IMR-90 (cell line): ENCODE measurements at regions of chr3 and their contacts with region 1.

Region 1: DNA sequence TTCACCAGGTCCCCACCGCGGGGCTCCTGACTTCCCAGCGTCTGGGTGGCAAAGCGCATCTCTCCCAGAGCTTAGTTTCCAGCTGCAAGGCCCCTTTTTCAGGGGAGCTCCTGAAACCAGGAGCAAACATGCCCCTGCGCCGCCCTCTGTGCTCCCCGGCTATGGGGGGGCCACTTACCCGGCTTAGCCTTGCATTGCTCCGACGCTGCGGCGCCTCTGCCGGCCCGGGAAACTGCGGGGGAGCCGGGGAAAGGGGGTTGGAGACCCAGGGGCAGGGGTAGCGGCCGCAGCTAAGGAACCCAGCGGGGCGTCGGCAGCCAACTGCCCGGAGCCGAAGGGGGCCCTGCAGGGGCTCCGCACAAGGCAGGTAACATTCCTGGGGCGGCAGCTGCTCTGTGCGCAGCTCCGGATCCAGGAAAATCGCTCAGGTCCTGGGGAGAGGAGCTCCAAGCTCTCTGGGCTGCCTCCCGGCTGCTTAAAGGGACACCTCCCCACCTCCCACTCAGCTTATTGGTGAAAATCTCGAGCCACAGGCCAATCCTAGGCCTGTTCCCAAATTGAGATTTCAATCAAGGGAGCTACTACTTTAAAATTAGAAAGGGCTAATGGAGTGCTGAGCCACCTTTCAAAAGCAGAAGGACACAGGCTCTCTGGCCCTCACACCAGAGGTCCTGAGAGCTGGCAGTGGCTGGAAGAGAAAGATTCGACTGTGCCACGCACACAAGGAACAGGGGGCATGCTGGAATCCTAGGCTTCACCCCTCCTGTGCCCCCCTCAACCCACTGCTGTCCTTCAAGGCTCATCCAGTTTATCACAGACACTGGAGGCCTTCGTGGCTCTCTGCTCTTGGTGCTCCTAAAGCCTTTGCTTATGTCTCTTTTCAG is 42.7 kb upstream of the PRICKLE2 start:
- DNase-seq: peak; percentile 68
- ATAC-seq: peak; percentile 90
- H3K4me3 ChIP-seq: peak overlapping the region; percentile 81
- H3K27ac ChIP-seq: peak overlapping the region; percentile 93
- H3K4me1 ChIP-seq: peaks cover 14% of the 10 kb centered on the region
- H3K27me3 ChIP-seq: no peaks in the 10 kb centered on the region
- CTCF ChIP-seq: 0 out of 2 replicates have a peak, but pooled peaks have one; percentile 2
- POLR2A ChIP-seq: peak; percentile 69
- RAD21 ChIP-seq: no peak; the same call in 1 of the 2 replicates

Region 2: GRCh38 chr3:64150623-64151207 is 117.2 kb before region 1 on chr3:
- CTCF ChIA-PET with region 1: no interaction called
- POLR2A ChIA-PET with region 1: interaction called, 3 read pairs
- dilution Hi-C with region 1: no loop called
- in situ Hi-C with region 1: no loop called
- intact Hi-C with region 1: loop called (anchors 1 kb)
- DNase-seq: peak; percentile 99
- ATAC-seq: peak; percentile 97
- H3K4me3 ChIP-seq: no peak overlapping the region
- H3K27ac ChIP-seq: peak overlapping the region; percentile 96
- H3K4me1 ChIP-seq: peaks cover 18% of the 10 kb centered on the region
- H3K27me3 ChIP-seq: no peaks in the 10 kb centered on the region
- CTCF ChIP-seq: no peak
- POLR2A ChIP-seq: peak; percentile 54; the same call in 1 of the 2 replicates
- RAD21 ChIP-seq: peak; percentile 16; the same call in 1 of the 2 replicates

Region 3: DNA sequence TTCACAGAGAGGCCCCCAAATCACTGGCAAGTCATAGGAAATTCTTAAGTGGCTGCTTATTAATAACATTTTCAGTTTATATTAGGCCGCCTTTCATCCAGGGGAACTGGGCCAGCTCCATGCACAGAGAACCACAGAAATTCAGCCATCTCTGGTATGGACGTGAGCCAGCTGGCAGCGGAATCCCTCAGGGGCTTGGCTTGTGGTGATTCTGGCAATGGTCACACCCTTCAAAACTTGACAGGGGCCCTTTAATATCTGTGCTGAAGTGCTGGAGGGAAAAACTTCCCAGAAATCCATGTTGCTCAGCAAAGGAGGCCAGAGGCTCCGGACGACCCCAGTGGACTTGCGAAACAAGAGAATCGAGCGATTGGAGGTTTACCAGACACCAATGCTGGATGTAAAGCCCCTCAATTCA is 54.0 kb before region 1 on chr3:
- CTCF ChIA-PET with region 1: no interaction called
- POLR2A ChIA-PET with region 1: no interaction called
- dilution Hi-C with region 1: no loop called
- in situ Hi-C with region 1: no loop called
- intact Hi-C with region 1: no loop called
- DNase-seq: peak; percentile 82
- ATAC-seq: peak; percentile 43
- H3K4me3 ChIP-seq: peak overlapping the region; percentile 30; the same call in 1 of the 2 replicates
- H3K27ac ChIP-seq: peak overlapping the region; percentile 66
- H3K4me1 ChIP-seq: peaks cover 26% of the 10 kb centered on the region
- H3K27me3 ChIP-seq: no peaks in the 10 kb centered on the region
- CTCF ChIP-seq: no peak
- POLR2A ChIP-seq: peak; percentile 42; the same call in 1 of the 2 replicates
- RAD21 ChIP-seq: no peak; the same call in 1 of the 2 replicates

Region 4: DNA sequence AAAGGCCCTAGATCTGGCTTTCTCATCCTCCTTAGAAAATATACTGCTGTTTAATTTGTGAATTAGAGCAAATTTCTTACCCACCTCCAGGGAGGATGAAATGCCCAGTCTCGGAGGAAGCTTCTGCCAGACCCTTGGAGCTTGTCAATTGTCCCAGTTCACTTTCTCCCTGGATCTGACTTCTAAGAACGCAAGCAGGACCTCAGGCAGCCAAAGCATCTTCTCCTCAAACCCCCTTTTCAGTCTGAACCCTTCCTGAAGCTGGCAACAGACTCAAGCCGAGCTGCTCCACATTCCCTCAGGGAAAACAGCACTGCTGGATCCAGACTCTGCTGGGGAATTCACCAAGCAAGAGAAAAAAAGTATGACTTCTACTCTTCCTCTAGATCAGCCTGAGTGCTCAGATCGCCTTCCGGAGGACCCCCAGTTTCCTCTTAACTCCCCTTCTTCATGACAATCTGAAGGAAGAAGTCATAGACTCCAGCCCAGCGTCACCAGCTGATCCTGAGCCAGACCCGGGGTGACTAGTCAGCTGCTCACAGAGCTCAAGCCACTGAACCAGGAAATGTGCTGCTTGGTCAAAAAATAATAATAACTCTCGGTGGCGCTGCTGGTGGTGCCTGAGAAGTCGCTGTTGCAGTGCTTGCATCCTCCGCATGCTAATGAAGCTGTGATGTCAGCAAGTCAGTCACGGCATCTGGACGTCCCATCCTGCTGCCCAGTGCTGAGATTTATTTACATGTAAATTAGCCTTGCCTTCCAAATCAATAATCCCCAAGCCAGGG is 42.9 kb before region 1 on chr3 and contains the start of gene PRICKLE2:
- CTCF ChIA-PET with region 1: interaction called, 4 read pairs
- POLR2A ChIA-PET with region 1: no interaction called
- dilution Hi-C with region 1: no loop called
- in situ Hi-C with region 1: no loop called
- intact Hi-C with region 1: loop called (anchors 5 kb)
- DNase-seq: peak; percentile 96
- ATAC-seq: peak; percentile 73
- H3K4me3 ChIP-seq: peak within 1 kb of the TSS; percentile 38
- H3K27ac ChIP-seq: peak within 1 kb of the TSS; percentile 89
- H3K4me1 ChIP-seq: peaks cover 32% of the 10 kb centered on the region
- H3K27me3 ChIP-seq: no peaks in the 10 kb centered on the region
- CTCF ChIP-seq: peak; percentile 49
- POLR2A ChIP-seq: peak; percentile 67
- RAD21 ChIP-seq: peak; percentile 70
- total RNA-seq, gene PRICKLE2: 14.2 and 16.7 TPM in 2 replicates

Region 5: DNA sequence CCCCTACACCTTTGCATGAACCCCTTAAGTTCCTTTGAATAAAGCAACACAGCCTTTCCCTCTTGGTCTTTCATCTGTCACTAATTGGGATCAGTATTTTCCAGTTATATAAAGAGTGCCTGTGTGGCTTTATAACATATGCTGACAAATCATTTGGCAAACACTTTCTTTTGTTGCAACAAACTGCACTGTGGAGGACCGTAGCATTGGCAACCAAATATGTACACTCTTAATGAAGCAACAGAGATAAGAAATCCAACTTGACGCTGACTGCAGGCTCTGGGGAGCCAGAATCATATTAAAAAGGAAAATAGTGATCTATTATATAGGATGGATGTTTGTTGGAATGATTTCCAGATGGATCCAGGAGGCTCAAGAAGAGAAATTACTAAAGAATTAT is 77.4 kb after region 1 on chr3:
- CTCF ChIA-PET with region 1: no interaction called
- POLR2A ChIA-PET with region 1: interaction called, 3 read pairs
- dilution Hi-C with region 1: no loop called
- in situ Hi-C with region 1: no loop called
- intact Hi-C with region 1: loop called (anchors 2 kb)
- DNase-seq: peak; percentile 89
- ATAC-seq: peak; percentile 4
- H3K4me3 ChIP-seq: no peak overlapping the region
- H3K27ac ChIP-seq: peak overlapping the region; percentile 77
- H3K4me1 ChIP-seq: peaks cover 30% of the 10 kb centered on the region
- H3K27me3 ChIP-seq: no peaks in the 10 kb centered on the region
- CTCF ChIP-seq: no peak
- POLR2A ChIP-seq: no peak
- RAD21 ChIP-seq: no peak

Region 6: DNA sequence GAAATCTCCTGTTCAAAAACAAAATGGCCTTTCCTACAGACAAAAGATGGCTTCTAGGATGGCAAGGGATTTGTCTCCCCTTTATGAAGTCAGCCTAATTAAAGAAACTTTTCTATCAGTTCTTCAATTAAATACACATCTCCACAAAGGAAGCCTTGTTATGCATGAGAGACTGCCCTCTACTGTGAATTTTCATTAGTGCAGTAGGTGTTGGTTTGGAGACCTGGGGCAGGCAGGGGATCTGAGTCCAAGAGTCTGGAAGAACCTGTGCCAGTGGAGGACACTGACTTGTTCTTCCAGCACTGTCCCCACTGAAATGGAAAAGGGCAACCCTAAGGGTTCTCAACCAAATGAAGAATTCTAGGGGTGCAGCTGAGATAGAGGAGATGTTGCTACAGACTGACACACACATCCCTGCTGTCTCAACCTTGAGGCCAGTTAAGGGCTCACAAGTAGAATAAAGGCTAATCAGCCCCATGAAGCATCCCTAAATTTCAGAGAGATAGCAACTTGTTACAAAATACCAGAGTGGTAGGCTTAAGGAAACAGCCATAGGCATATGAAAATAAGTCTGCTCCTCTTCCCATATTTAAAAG is 131.3 kb after region 1 on chr3:
- CTCF ChIA-PET with region 1: no interaction called
- POLR2A ChIA-PET with region 1: no interaction called
- dilution Hi-C with region 1: no loop called
- in situ Hi-C with region 1: no loop called
- intact Hi-C with region 1: loop called (anchors 1 kb)
- DNase-seq: peak; percentile 70
- ATAC-seq: peak; percentile 89
- H3K4me3 ChIP-seq: no peak overlapping the region
- H3K27ac ChIP-seq: no peak overlapping the region
- H3K4me1 ChIP-seq: peaks cover 2% of the 10 kb centered on the region
- H3K27me3 ChIP-seq: no peaks in the 10 kb centered on the region
- CTCF ChIP-seq: peak; percentile 85
- POLR2A ChIP-seq: no peak
- RAD21 ChIP-seq: peak; percentile 95

Region 7: DNA sequence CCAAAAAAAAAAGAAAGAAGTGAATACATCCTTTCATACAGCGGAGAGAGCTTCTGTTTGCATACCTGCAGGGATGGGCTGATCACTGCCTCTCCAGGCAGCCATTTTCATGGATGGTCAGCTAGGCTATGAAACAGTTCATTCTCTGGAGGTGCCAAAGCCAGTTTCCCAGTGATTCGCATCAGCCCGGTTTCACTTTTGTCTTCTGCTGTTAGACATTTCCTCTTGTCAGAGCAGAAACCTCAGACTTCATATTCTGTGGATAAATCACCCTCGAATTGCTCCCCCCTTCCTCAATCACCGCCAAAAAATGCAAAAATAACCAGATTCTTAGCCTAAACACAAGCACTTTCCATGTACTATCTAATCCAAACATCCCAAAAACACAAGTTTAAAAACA is 194.2 kb after region 1 on chr3:
- CTCF ChIA-PET with region 1: no interaction called
- POLR2A ChIA-PET with region 1: interaction called, 3 read pairs
- dilution Hi-C with region 1: no loop called
- in situ Hi-C with region 1: no loop called
- intact Hi-C with region 1: loop called (anchors 5 kb)
- DNase-seq: peak; percentile 93
- ATAC-seq: peak; percentile 73
- H3K4me3 ChIP-seq: peak overlapping the region; percentile 28; the same call in 1 of the 2 replicates
- H3K27ac ChIP-seq: peak overlapping the region; percentile 95
- H3K4me1 ChIP-seq: peaks cover 21% of the 10 kb centered on the region
- H3K27me3 ChIP-seq: no peaks in the 10 kb centered on the region
- CTCF ChIP-seq: no peak
- POLR2A ChIP-seq: no peak
- RAD21 ChIP-seq: no peak

Region 8: DNA sequence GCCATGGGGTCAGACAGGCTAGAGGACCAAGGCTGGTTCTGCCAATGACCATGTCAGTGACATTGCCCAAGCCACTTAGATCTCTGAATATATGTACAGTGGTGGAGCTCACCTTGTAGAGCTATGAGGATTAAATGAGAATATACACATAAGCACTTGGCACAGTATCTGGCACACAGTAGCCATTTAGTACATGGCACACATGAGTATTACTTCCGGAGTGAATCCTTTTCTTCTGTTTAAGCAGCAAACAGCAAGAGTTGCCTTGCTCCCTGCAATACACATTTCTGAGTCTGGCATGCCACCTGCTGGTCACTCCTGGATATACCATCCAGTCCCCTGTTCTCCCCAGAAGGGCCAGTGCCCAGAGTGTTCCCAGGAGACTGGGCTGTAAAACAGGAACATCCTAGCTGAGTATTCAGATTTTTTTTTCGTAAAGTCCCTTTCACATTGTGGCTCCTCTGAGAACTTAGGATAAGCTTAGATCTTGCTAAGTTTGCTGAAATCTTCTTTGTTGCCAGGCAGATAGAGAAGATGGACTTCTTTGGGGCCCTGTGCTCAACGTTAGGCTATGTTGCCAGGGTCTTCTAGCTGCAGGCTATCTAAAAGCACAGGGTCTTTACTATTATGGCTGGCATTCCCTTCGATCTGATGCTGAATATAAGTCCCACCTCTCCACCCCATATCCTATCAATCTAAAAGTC is 216.5 kb after region 1 on chr3:
- CTCF ChIA-PET with region 1: no interaction called
- POLR2A ChIA-PET with region 1: no interaction called
- dilution Hi-C with region 1: no loop called
- in situ Hi-C with region 1: loop called (anchors 10 kb)
- intact Hi-C with region 1: loop called (anchors 2 kb)
- DNase-seq: peak; percentile 80
- ATAC-seq: peak; percentile 100
- H3K4me3 ChIP-seq: no peak overlapping the region
- H3K27ac ChIP-seq: no peak overlapping the region
- H3K4me1 ChIP-seq: no peaks in the 10 kb centered on the region
- H3K27me3 ChIP-seq: no peaks in the 10 kb centered on the region
- CTCF ChIP-seq: peak; percentile 92
- POLR2A ChIP-seq: 0 out of 2 replicates have a peak, but pooled peaks have one; percentile 34
- RAD21 ChIP-seq: peak; percentile 99